Upper lobe of right lung (tissue), 1 donor: ENCODE measurements at regions of chr1 and their contacts with region 1.

Region 1: GRCh38 chr1:100912019-100912418 is 16.1 kb downstream of the SLC30A7 start:
- DNase-seq: no peak
- ATAC-seq: no peak
- H3K4me3 ChIP-seq: no peak overlapping the region
- H3K27ac ChIP-seq: no peak overlapping the region
- H3K4me1 ChIP-seq: no peaks in the 10 kb centered on the region
- H3K27me3 ChIP-seq: no peaks in the 10 kb centered on the region
- CTCF ChIP-seq: no peak

Region 2: DNA sequence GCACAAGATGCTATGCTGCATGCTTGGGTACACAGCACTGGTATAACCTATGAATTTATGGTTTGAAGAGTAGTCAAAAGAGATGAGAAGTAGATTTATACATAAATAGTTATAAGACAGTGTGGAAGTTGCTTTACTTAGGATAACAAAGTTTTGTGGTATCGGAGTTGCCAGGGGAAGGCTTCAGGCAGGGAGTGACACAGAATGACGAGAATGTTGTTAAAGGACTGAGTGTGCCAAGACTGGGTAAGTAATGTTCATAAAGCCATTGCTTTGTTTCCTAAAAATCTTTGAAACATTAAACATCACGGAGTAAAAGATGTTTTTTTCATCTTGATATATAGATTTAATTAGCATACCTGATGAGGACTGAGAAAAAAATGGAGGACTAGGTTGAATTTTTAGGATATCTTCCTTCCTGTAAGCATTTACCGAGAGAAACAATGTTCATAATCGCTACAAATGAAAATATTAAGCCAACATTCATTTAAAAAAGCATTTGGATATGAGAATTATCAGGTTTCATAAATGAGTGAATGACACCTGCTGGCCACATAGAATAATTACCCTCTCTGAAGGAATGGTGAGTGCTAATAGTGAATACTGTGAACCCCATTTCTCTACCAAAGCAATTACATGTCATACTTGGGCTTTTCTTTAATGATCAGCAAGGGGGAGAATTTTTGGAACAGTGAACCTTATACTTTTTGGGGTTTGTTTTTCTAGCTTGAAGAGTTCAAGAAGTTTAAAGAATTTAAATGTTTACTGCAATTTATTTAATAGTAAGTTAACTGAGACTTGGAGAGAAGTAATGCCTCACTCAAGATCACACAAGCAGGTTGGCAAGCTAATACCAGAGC is 45.7 kb before region 1 on chr1:
- intact Hi-C with region 1: no loop called
- DNase-seq: no peak
- ATAC-seq: peak; percentile 69
- H3K4me3 ChIP-seq: no peak overlapping the region
- H3K27ac ChIP-seq: no peak overlapping the region
- H3K4me1 ChIP-seq: no peaks in the 10 kb centered on the region
- H3K27me3 ChIP-seq: no peaks in the 10 kb centered on the region
- CTCF ChIP-seq: peak; percentile 69

Region 3: GRCh38 chr1:101178688-101179491 is 266.9 kb after region 1 on chr1:
- intact Hi-C with region 1: no loop called
- DNase-seq: no peak
- ATAC-seq: peak; percentile 62
- H3K4me3 ChIP-seq: no peak overlapping the region
- H3K27ac ChIP-seq: no peak overlapping the region
- H3K4me1 ChIP-seq: peaks cover 3% of the 10 kb centered on the region
- H3K27me3 ChIP-seq: no peaks in the 10 kb centered on the region
- CTCF ChIP-seq: no peak

Region 4: DNA sequence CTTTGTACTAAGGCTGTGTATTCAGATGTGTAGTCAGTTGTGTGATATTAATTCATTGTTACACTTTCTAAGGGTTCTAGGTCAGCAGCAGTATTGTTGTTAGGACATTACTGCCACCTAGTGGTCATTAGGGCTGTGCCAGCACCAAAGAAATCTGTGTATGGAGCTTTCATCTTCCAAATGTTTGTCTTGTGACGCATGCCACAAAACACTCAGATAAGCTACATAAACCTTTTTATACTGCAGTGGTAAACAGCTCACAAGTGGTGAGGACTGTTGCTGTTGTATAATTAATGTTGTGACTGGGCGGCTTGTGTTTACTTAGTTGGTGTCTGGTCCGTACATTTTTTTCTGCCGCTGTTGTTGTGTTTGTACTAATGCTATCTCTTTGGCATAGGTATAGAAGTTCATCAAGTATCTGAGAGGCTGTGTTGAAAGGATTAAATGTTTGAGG is 376.5 kb after region 1 on chr1:
- intact Hi-C with region 1: loop called (anchors 5 kb)
- DNase-seq: no peak
- ATAC-seq: peak; percentile 93
- H3K4me3 ChIP-seq: no peak overlapping the region
- H3K27ac ChIP-seq: no peak overlapping the region
- H3K4me1 ChIP-seq: peaks cover 5% of the 10 kb centered on the region
- H3K27me3 ChIP-seq: no peaks in the 10 kb centered on the region
- CTCF ChIP-seq: peak; percentile 98